ENCODE measurements at regions of chr22 and their contacts with region 1.

Region 1: DNA sequence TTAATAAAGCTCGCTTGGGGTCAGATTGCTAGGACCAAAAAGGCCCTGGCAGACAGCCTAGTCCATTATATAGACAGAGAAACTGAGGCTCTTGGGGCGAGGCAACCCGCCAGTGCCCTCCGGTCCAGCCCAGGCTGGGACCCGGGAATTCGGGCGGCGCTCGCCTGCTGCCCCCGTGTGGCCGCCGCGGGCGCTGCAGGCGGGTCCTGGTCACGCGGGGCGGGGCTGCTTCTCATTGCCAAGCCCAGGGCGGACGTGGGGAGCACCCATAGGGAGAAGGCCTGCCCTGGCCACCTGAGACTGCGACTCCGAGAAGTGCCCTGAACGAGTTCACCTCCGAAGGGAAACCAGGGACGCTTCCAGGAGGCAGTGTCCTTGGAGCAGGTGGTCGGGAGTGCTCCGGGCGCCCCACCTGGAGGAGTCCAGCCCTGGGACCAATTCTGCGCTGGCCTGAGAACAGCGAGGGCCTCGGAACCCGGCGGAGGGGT is 36.0 kb upstream of the CSNK1E start:
- DNase-seq: peak; percentile 77 to 79
- ATAC-seq: peak; percentile 89 to 99 (median 95)
- H3K4me3 ChIP-seq: no peak overlapping the region
- H3K4me3 Mint-ChIP-seq: no peak overlapping the region
- H3K27ac ChIP-seq: no peak overlapping the region
- H3K27ac Mint-ChIP-seq: no peak overlapping the region
- H3K4me1 ChIP-seq: peaks cover 6% of the 10 kb centered on the region
- H3K4me1 Mint-ChIP-seq: no peaks in the 10 kb centered on the region
- H3K27me3 ChIP-seq: no peaks in the 10 kb centered on the region
- H3K27me3 Mint-ChIP-seq: no peaks in the 10 kb centered on the region
- CTCF ChIP-seq: peak; percentile 95

Region 2: GRCh38 chr22:38262051-38262795 is 91.0 kb before region 1 on chr22:
- intact Hi-C with region 1: loop called (anchors 1 kb)
- DNase-seq: peak; percentile 36 to 56
- ATAC-seq: peak; percentile 29 to 50 (median 49)
- H3K4me3 ChIP-seq: no peak overlapping the region
- H3K4me3 Mint-ChIP-seq: no peak overlapping the region
- H3K27ac ChIP-seq: no peak overlapping the region
- H3K27ac Mint-ChIP-seq: peak overlapping the region; percentile 76 to 80
- H3K4me1 ChIP-seq: peaks cover 63% of the 10 kb centered on the region
- H3K4me1 Mint-ChIP-seq: peaks cover 58 to 67% of the 10 kb centered on the region in 2 donors
- H3K27me3 ChIP-seq: no peaks in the 10 kb centered on the region
- H3K27me3 Mint-ChIP-seq: no peaks in the 10 kb centered on the region
- CTCF ChIP-seq: peak; percentile 27

Region 3: GRCh38 chr22:38284042-38284402 is 69.2 kb before region 1 on chr22:
- intact Hi-C with region 1: no loop called
- DNase-seq: no peak
- ATAC-seq: no peak
- H3K4me3 ChIP-seq: no peak overlapping the region
- H3K4me3 Mint-ChIP-seq: no peak overlapping the region
- H3K27ac ChIP-seq: no peak overlapping the region
- H3K27ac Mint-ChIP-seq: no peak overlapping the region
- H3K4me1 ChIP-seq: no peaks in the 10 kb centered on the region
- H3K4me1 Mint-ChIP-seq: no peaks in the 10 kb centered on the region
- H3K27me3 ChIP-seq: no peaks in the 10 kb centered on the region
- H3K27me3 Mint-ChIP-seq: no peaks in the 10 kb centered on the region
- CTCF ChIP-seq: no peak

Region 4: GRCh38 chr22:38298312-38299000 is 54.7 kb before region 1 on chr22:
- intact Hi-C with region 1: loop called (anchors 1 kb)
- DNase-seq: peak; percentile 47 to 67
- ATAC-seq: peak; percentile 48 to 70 (median 62)
- H3K4me3 ChIP-seq: no peak overlapping the region
- H3K4me3 Mint-ChIP-seq: no peak overlapping the region
- H3K27ac ChIP-seq: no peak overlapping the region
- H3K27ac Mint-ChIP-seq: no peak overlapping the region
- H3K4me1 ChIP-seq: no peaks in the 10 kb centered on the region
- H3K4me1 Mint-ChIP-seq: peaks cover 0 to 4% of the 10 kb centered on the region in 2 donors
- H3K27me3 ChIP-seq: no peaks in the 10 kb centered on the region
- H3K27me3 Mint-ChIP-seq: no peaks in the 10 kb centered on the region
- CTCF ChIP-seq: peak; percentile 59

Region 5: GRCh38 chr22:38317122-38317994 is 35.8 kb before region 1 on chr22 and contains the start of gene CSNK1E:
- intact Hi-C with region 1: no loop called
- DNase-seq: peak; percentile 74 to 83
- ATAC-seq: peak; percentile 64 to 80 (median 70)
- H3K4me3 ChIP-seq: peak within 1 kb of the TSS; percentile 51
- H3K4me3 Mint-ChIP-seq: peak within 1 kb of the TSS; percentile 90
- H3K27ac ChIP-seq: peak within 1 kb of the TSS; percentile 89
- H3K27ac Mint-ChIP-seq: peak within 1 kb of the TSS; percentile 88 to 95
- H3K4me1 ChIP-seq: peaks cover 51% of the 10 kb centered on the region
- H3K4me1 Mint-ChIP-seq: peaks cover 39 to 51% of the 10 kb centered on the region in 2 donors
- H3K27me3 ChIP-seq: no peaks in the 10 kb centered on the region
- H3K27me3 Mint-ChIP-seq: no peaks in the 10 kb centered on the region
- CTCF ChIP-seq: no peak
- total RNA-seq, gene CSNK1E: 126 to 178 (median 149) TPM

Measured in natural killer cell (primary cell).